ENCODE measurements at regions of chr5 and their contacts with region 1.

Region 1: GRCh38 chr5:148963664-148964063 is 99.2 kb downstream of the SH3TC2 start:
- DNase-seq: no peak
- H3K4me3 Mint-ChIP-seq: no peak overlapping the region
- H3K27ac Mint-ChIP-seq: peak overlapping the region; percentile 57
- H3K4me1 Mint-ChIP-seq: peaks cover 58% of the 10 kb centered on the region
- H3K27me3 Mint-ChIP-seq: no peaks in the 10 kb centered on the region
- CTCF ChIP-seq: no peak

Region 2: DNA sequence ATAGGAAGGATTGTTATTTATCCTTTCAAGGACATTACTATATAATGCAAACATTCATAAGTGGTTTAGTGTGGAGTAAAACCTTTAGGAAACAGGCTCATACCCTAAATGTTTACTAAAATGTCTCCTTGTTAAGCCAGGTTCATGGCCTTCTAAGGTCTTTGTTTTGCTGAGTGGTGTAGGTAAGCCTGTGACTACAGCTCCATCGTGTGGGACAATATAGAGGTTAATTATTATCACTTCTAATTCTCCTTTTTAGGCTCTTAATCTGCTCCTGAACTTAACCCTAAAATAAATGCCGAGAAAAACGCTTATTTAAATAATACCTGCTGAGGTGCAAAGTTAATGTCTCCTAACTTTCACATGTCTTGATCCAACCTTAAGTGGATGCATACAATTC is 856.1 kb before region 1 on chr5:
- CTCF ChIA-PET with region 1: no interaction called
- POLR2A ChIA-PET with region 1: no interaction called
- intact Hi-C with region 1: no loop called
- DNase-seq: peak; percentile 65
- H3K4me3 Mint-ChIP-seq: no peak overlapping the region
- H3K27ac Mint-ChIP-seq: no peak overlapping the region
- H3K4me1 Mint-ChIP-seq: no peaks in the 10 kb centered on the region
- H3K27me3 Mint-ChIP-seq: no peaks in the 10 kb centered on the region
- CTCF ChIP-seq: peak; percentile 55

Region 3: GRCh38 chr5:148776780-148777179 is 186.9 kb before region 1 on chr5:
- CTCF ChIA-PET with region 1: no interaction called
- POLR2A ChIA-PET with region 1: no interaction called
- intact Hi-C with region 1: no loop called
- DNase-seq: peak; percentile 95
- H3K4me3 Mint-ChIP-seq: no peak overlapping the region
- H3K27ac Mint-ChIP-seq: no peak overlapping the region
- H3K4me1 Mint-ChIP-seq: peaks cover 11% of the 10 kb centered on the region
- H3K27me3 Mint-ChIP-seq: no peaks in the 10 kb centered on the region
- CTCF ChIP-seq: no peak

Region 4: DNA sequence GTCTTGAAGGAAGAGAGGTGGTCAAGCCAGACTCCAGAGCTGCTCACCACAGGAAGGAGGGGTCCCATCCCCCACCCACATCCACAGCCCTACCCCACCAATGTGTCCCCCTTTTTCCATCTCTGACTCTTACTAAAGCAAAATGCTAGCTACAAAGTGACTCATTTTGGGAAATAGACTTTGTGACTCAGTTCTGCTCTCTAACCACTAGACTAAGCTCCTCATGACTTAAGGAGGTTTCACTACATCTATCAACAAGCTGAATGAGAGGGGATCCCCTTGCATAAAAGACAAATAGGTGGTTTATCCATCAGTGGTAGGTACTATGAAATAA is 172.4 kb before region 1 on chr5:
- CTCF ChIA-PET with region 1: no interaction called
- POLR2A ChIA-PET with region 1: no interaction called
- intact Hi-C with region 1: no loop called
- DNase-seq: peak; percentile 66
- H3K4me3 Mint-ChIP-seq: no peak overlapping the region
- H3K27ac Mint-ChIP-seq: peak overlapping the region; percentile 88
- H3K4me1 Mint-ChIP-seq: peaks cover 60% of the 10 kb centered on the region
- H3K27me3 Mint-ChIP-seq: no peaks in the 10 kb centered on the region
- CTCF ChIP-seq: no peak

Region 5: GRCh38 chr5:148831590-148832565 is 131.8 kb before region 1 on chr5:
- CTCF ChIA-PET with region 1: interaction called, 18 read pairs
- POLR2A ChIA-PET with region 1: interaction called, 136 read pairs
- intact Hi-C with region 1: no loop called
- DNase-seq: no peak
- H3K4me3 Mint-ChIP-seq: peak overlapping the region; percentile 90
- H3K27ac Mint-ChIP-seq: peak overlapping the region; percentile 69
- H3K4me1 Mint-ChIP-seq: peaks cover 87% of the 10 kb centered on the region
- H3K27me3 Mint-ChIP-seq: no peaks in the 10 kb centered on the region
- CTCF ChIP-seq: no peak

Region 6: GRCh38 chr5:148949841-148950470 is 13.7 kb before region 1 on chr5:
- CTCF ChIA-PET with region 1: interaction called, 24 read pairs
- POLR2A ChIA-PET with region 1: interaction called, 49 read pairs
- intact Hi-C with region 1: no loop called
- DNase-seq: peak; percentile 97
- H3K4me3 Mint-ChIP-seq: no peak overlapping the region
- H3K27ac Mint-ChIP-seq: peak overlapping the region; percentile 92
- H3K4me1 Mint-ChIP-seq: peaks cover 17% of the 10 kb centered on the region
- H3K27me3 Mint-ChIP-seq: no peaks in the 10 kb centered on the region
- CTCF ChIP-seq: no peak

Region 7: GRCh38 chr5:148979104-148979723 is 15.6 kb after region 1 on chr5:
- CTCF ChIA-PET with region 1: interaction called, 1,118 read pairs
- POLR2A ChIA-PET with region 1: interaction called, 1,127 read pairs
- intact Hi-C with region 1: loop called (anchors 2 kb)
- DNase-seq: peak; percentile 95
- H3K4me3 Mint-ChIP-seq: peak overlapping the region; percentile 59
- H3K27ac Mint-ChIP-seq: peak overlapping the region; percentile 97
- H3K4me1 Mint-ChIP-seq: peaks cover 70% of the 10 kb centered on the region
- H3K27me3 Mint-ChIP-seq: no peaks in the 10 kb centered on the region
- CTCF ChIP-seq: no peak

Region 8: GRCh38 chr5:148984333-148984732 is 20.7 kb after region 1 on chr5:
- CTCF ChIA-PET with region 1: interaction called, 1,118 read pairs
- POLR2A ChIA-PET with region 1: interaction called, 1,127 read pairs
- intact Hi-C with region 1: loop called (anchors 1 kb)
- DNase-seq: peak; percentile 89
- H3K4me3 Mint-ChIP-seq: no peak overlapping the region
- H3K27ac Mint-ChIP-seq: peak overlapping the region; percentile 95
- H3K4me1 Mint-ChIP-seq: peaks cover 68% of the 10 kb centered on the region
- H3K27me3 Mint-ChIP-seq: no peaks in the 10 kb centered on the region
- CTCF ChIP-seq: no peak

Region 9: DNA sequence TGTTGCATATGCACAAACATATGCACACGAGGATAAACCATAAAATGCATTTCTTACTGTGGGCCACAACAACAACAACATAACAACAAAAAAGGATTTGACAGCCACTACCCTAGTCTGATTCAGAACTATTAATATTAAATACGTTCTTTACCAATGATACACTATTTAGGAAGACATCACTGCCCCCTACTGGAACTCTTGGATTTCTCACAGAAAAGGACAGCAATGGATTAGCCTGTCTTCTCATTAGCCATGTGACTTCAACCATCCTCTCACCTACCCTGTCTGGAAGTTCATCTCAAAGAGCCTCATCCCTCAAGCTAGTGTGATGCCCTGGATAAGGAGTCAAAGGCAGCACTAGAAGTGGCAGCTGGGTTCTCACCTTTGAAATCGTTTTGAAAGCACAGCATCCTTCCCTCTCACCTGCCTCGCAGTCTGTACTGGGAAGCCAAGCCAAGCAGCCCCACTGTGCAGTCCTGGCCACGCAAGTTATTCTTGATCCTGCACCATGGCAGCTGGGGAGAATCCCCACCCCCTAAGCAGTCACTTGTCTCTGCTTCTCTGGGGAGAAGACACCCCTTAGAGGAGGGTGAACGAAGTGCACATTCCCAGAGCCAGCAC is 34.6 kb after region 1 on chr5:
- CTCF ChIA-PET with region 1: interaction called, 1,118 read pairs
- POLR2A ChIA-PET with region 1: interaction called, 1,127 read pairs
- intact Hi-C with region 1: loop called (anchors 1 kb)
- DNase-seq: peak; percentile 93
- H3K4me3 Mint-ChIP-seq: no peak overlapping the region
- H3K27ac Mint-ChIP-seq: peak overlapping the region; percentile 73
- H3K4me1 Mint-ChIP-seq: peaks cover 60% of the 10 kb centered on the region
- H3K27me3 Mint-ChIP-seq: no peaks in the 10 kb centered on the region
- CTCF ChIP-seq: peak; percentile 79